Left ventricle myocardium inferior (tissue), 1 donor: ENCODE measurements at regions of chr11 and their contacts with region 1.

Region 1: GRCh38 chr11:122505304-122506006 is 150.1 kb upstream of the UBASH3B start:
- DNase-seq: peak; percentile 71
- H3K4me3 ChIP-seq: no peak overlapping the region
- H3K27ac ChIP-seq: no peak overlapping the region
- H3K4me1 ChIP-seq: peaks cover 6% of the 10 kb centered on the region
- H3K27me3 ChIP-seq: peaks cover 10% of the 10 kb centered on the region
- CTCF ChIP-seq: peak; percentile 91

Region 2: DNA sequence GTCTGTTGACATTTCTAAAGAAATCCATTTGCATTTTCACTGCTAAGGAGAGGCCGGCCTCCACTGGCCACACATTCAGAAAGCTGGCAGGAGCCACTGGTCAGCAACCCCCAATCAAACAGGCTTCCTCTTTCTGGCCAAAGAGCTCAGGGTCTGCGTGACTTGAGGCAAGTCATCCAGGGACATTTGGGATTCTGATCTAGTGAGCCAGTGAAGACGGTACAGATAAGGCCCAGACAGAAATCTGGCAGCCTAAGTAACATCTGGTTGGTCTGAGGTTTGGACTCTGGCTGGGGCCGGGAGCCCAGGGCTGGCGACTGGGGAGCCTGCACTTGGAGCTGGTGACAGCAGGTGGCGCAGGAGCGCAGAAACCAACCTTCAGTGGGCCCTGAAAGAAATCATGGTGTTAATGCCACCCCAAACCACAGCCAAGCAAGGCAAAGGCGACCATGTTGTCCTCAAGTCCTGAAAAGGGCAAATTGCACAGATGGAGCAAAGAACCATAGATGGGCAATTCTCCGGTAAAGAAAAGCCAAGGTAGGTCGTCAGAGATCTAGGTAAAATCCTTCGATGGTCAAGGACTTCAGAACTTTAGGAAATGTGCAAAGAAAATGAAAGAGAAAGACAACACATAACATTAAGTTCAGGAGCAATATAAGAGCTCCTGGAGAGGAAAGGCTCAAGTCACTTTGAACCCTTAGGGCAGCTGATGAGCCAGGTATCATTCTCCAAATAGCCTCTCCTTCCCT is 290.0 kb before region 1 on chr11:
- intact Hi-C with region 1: loop called (anchors 5 kb)
- DNase-seq: peak; percentile 80
- H3K4me3 ChIP-seq: no peak overlapping the region
- H3K27ac ChIP-seq: peak overlapping the region; percentile 53
- H3K4me1 ChIP-seq: peaks cover 20% of the 10 kb centered on the region
- H3K27me3 ChIP-seq: no peaks in the 10 kb centered on the region
- CTCF ChIP-seq: peak; percentile 97

Region 3: DNA sequence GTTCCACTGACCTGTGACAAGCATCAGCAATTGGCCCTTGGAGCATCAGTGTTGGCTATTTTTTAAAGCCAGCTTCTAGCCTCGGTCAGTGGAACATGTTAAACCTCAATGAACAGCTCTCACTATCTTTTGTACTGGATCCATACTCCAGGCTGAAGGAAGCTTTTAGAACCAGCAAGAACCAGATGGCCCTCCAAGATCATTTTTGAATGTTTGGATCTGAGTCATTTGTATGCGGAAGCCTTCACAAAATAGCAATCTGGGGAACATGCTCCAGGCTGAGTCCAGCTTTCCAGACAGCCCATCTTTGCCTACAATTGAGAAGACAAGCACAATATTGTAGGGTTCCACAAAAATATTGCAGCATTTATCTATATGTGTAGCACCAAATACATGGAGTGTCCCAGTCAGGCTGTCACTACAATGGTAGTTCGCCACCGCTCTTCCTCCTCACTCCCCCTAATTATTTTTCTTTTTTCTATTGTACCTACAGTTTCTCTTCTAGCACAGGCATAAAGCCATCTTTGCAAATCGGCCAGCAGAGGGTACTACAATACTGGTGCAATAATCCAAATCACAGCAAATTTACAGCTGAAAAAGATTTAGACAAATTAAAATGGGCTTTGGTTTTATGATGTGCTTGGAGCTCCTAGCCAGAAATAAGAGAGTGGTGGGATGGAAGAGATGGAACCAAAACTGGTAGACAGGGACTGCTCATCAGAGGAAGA is 212.0 kb before region 1 on chr11:
- intact Hi-C with region 1: loop called (anchors 10 kb)
- DNase-seq: no peak
- H3K4me3 ChIP-seq: no peak overlapping the region
- H3K27ac ChIP-seq: no peak overlapping the region
- H3K4me1 ChIP-seq: no peaks in the 10 kb centered on the region
- H3K27me3 ChIP-seq: no peaks in the 10 kb centered on the region
- CTCF ChIP-seq: peak; percentile 64